HCT116 (cell line): ENCODE measurements at regions of chr22 and their contacts with region 1.

Region 1: DNA sequence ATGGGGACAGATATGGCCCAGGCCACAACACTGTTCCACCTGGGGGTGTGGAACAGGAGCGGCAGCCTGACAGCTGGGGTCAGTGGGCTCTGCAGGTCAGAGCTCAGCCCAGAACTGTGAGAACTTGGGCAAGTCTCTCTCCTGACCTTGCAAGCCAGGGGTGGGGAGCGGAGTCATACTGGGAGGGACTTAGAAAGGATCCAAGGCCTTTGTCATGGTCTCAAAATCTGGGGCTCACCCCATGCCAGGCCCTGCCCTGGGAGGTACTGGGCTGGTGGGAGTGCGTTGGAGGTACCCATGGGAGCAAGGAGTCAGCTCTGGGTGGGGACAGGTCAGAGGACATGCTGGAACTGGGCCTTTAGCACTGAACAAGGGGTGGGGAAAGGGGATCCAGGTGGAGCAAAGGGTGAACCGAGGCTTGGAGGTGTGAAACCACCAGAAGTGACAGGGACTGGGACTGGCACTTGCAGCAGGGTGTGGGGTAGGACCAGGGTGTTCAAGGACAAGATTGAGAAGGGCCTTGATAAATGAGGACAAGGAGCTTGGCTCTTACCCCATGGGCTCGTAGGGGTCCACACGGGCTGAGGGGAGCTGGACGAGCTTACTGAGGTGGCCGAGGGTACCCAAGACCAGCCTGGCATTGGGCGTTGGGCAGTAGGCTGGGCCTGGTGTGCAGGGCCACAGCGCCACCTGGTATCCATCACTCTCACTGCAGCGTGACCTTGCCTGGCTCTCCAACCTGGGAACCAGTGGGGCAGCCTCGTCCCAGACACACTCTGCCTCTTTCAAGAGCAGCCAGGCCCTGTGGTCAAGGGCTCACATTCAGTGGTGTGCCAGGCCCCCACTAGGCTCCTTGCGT is 7.4 kb upstream of the PMM1 start:
- DNase-seq: no peak
- ATAC-seq: peak; percentile 94
- H3K4me3 ChIP-seq: no peak overlapping the region
- H3K27ac ChIP-seq: no peak overlapping the region
- H3K4me1 ChIP-seq: peaks cover 0 to 11% of the 10 kb centered on the region in 2 experiments; a peak in 2 of 4 replicates
- H3K27me3 ChIP-seq: no peaks in the 10 kb centered on the region
- CTCF ChIP-seq: peak; percentile 84 to 93 (median 88)
- POLR2A ChIP-seq: no peak
- RAD21 ChIP-seq: peak; percentile 94

Region 2: GRCh38 chr22:41532908-41533825 is 63.8 kb before region 1 on chr22:
- CTCF ChIA-PET with region 1: interaction called, 3 read pairs
- POLR2A ChIA-PET with region 1: no interaction called
- RAD21 ChIA-PET with region 1: no interaction called
- intact Hi-C with region 1: loop called (anchors 1 kb)
- DNase-seq: no peak
- ATAC-seq: peak; percentile 76
- H3K4me3 ChIP-seq: no peak overlapping the region
- H3K27ac ChIP-seq: no peak overlapping the region; the same call in 1 of the 2 replicates
- H3K4me1 ChIP-seq: no peaks in the 10 kb centered on the region
- H3K27me3 ChIP-seq: no peaks in the 10 kb centered on the region
- CTCF ChIP-seq: peak; percentile 45 to 86 (median 85); a peak in 5 of 6 replicates
- POLR2A ChIP-seq: no peak
- RAD21 ChIP-seq: peak; percentile 56

Region 3: DNA sequence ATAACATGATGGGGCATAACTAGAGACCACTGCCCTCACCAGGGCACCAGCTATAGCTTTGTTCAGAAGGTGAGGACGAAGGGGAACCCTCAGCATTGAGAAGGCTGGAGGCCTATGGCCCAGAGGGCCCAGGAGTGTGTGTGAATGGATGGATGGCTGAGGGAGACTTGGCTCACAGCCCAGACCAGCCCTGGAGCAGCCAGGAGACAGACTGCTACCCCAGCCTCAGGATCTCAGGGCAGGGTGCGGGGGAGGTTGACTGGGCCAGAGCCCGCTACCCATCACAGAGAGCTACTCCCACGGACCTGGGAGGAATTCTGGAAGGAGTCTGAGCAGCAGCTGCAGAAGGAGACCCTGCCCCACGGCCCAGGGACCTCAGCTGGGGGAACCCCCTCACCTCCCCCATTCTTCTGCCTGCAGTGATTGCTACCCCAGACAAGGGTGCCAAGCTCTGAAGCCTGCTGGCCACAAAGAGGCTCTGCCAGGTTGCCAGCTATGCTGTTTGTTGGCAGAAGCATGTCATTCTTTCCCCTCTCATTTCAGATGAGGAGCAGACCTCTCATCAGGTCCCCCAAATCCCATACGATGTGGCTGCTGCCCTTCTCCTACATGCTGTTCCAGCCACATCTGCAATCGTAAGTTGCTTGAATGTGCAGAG is 41.6 kb before region 1 on chr22:
- CTCF ChIA-PET with region 1: interaction called, 6 read pairs
- POLR2A ChIA-PET with region 1: interaction called, 3 read pairs
- RAD21 ChIA-PET with region 1: interaction called in 1 of 2 experiments, 3 read pairs
- intact Hi-C with region 1: loop called (anchors 2 kb)
- DNase-seq: no peak
- ATAC-seq: no peak
- H3K4me3 ChIP-seq: no peak overlapping the region
- H3K27ac ChIP-seq: no peak overlapping the region
- H3K4me1 ChIP-seq: peaks cover 8 to 22% of the 10 kb centered on the region in 2 experiments; a peak in 3 of 4 replicates
- H3K27me3 ChIP-seq: no peaks in the 10 kb centered on the region
- CTCF ChIP-seq: no peak
- POLR2A ChIP-seq: no peak
- RAD21 ChIP-seq: no peak

Region 4: DNA sequence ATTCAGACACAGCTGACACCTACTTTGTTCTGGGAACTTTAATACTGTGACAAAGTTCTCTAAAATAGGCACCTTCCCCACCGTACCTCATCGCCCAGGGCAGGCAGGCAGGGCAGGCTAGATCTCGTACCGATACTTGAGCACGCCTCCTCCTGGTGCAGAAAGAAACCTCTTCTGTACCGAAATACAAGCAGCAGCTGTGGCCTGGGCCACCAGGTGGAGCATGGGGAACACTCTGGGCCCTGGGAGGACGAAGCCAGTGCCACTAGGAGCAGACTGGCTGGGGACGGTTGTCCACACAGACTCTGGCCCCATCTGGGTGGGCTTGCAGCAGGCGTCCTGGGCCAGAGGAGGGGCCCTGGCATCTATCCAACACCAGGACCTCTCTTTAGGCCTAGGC is 20.1 kb before region 1 on chr22:
- CTCF ChIA-PET with region 1: no interaction called
- POLR2A ChIA-PET with region 1: no interaction called
- RAD21 ChIA-PET with region 1: no interaction called
- intact Hi-C with region 1: no loop called
- DNase-seq: peak; percentile 35
- ATAC-seq: peak; percentile 97
- H3K4me3 ChIP-seq: no peak overlapping the region
- H3K27ac ChIP-seq: no peak overlapping the region
- H3K4me1 ChIP-seq: no peaks in the 10 kb centered on the region
- H3K27me3 ChIP-seq: no peaks in the 10 kb centered on the region
- CTCF ChIP-seq: peak; percentile 89 to 98 (median 90)
- POLR2A ChIP-seq: no peak
- RAD21 ChIP-seq: peak; percentile 82